Right ventricle myocardium inferior (tissue), 1 donor: ENCODE measurements at regions of chr14 and their contacts with region 1.

Region 1: DNA sequence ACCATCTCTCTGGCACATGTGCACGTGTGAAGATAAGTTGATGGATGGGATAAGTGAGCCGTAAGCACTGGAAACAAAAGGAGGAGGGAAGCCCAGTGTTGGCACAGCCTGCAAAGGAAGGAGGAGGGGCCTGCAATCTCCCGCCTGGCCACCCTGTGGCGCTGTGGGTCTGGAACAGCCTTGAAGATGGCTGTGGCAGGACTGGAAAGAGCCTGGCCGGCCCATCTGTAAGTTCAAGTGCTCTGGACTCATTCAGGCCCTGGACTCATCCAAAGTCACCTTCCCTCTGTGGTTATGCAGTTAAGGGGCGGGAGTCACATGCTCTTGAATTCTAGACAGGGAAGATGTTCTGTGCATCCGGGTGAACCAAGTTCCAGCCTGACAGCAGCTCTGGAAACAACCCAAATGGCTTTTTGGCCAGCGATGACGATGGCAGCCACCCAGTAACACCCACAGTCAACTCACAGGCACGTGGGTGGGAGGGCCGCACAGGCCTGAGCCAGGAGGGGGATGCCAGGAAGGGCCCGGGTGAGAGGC is 50.4 kb downstream of the CHGA start:
- DNase-seq: peak; percentile 87
- ATAC-seq: peak; percentile 93

Region 2: GRCh38 chr14:92937051-92937937 is 36.0 kb before region 1 on chr14:
- intact Hi-C with region 1: no loop called
- DNase-seq: peak; percentile 35
- ATAC-seq: no peak

Region 3: GRCh38 chr14:93023039-93023438 is 49.7 kb after region 1 on chr14:
- intact Hi-C with region 1: no loop called
- DNase-seq: no peak
- ATAC-seq: no peak

Region 4: GRCh38 chr14:93035917-93036651 is 62.8 kb after region 1 on chr14:
- intact Hi-C with region 1: loop called (anchors 5 kb)
- DNase-seq: no peak
- ATAC-seq: peak; percentile 11

Region 5: DNA sequence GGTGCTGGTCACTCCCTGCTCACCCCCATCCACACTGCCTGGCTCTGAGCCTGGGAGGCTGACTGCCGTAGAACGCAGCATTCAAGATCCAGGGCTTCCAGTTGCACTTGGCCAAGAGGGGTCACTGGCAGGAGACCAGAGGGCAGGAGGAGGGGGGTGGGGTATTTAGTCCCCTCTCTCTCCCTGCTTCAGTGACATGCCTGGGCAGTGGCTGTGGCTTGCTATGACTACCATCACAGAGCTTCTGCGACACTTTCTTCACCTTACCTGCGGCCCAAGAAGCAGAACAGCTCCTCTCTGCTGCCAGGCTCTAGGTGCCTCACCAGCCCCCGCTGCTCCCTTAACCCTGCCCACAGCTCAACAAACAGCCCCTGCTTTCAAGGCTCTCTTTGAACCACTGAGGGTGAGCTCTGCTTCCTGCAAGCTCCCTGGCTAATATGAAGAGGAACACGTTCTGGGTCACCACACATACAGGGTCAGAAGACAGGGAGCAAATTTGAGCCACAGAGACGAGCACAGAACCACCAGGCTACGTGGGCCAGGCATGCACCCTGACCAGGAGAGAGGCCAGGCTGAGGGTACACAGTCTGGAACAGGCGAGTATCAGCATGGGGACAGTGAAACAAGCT is 86.7 kb after region 1 on chr14:
- intact Hi-C with region 1: no loop called
- DNase-seq: no peak
- ATAC-seq: peak; percentile 30

Region 6: GRCh38 chr14:93132470-93133065 is 159.2 kb after region 1 on chr14:
- intact Hi-C with region 1: loop called (anchors 5 kb)
- DNase-seq: no peak
- ATAC-seq: peak; percentile 66

Region 7: GRCh38 chr14:93249128-93249821 is 275.9 kb after region 1 on chr14:
- intact Hi-C with region 1: no loop called
- DNase-seq: no peak
- ATAC-seq: no peak